ENCODE measurements at regions of chr14 and their contacts with region 1.

Region 1: DNA sequence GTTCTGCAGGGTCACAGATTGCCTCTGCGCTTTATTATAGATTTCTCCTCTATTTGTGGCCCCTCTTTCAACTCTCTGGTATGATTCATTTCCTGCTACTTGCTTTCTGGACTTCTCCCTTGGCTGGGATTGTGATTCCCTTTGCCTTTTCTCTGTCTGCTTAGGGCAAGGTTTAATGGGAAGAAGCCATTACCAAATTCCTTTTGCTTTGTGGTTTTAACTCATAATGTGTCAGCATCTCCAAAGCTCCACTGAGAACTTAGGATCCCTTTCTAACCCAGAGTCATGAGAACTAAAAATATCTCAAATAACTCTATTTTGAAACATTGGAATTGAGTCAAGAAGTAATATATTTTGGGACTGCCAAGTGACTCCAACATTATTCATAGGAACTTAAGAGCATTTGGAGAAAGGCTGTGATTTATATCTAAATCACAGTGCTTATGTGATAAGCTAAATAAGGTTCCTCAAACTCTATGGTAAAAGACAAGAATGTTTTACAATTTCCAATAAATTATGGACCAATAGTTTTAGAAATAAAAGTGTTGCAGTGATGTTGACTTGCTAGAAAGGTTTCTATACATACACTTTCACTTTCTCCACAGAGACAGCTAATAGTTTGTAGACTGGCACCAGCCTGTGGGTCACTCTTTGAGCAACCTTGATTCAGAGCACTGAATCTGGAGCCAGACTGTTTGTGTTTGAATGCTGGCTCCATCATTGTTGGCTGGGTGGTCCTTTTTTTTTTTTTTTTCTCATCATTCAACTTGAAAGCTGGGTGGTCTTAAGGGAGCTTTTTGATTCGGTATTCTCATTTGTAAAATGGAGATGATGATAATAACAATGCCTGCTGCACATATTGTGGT is 93.9 kb downstream of the DACT1 start:
- DNase-seq: peak; percentile 100
- ATAC-seq: peak; percentile 94
- H3K4me3 ChIP-seq: peak overlapping the region; percentile 1; the same call in 1 of the 2 replicates
- H3K27ac ChIP-seq: peak overlapping the region; percentile 85
- H3K4me1 ChIP-seq: peaks cover 31% of the 10 kb centered on the region
- H3K27me3 ChIP-seq: no peaks in the 10 kb centered on the region
- CTCF ChIP-seq: no peak

Region 2: GRCh38 chr14:58919217-58919616 is 187.5 kb after region 1 on chr14:
- CTCF ChIA-PET with region 1: no interaction called
- POLR2A ChIA-PET with region 1: no interaction called
- intact Hi-C with region 1: loop called (anchors 10 kb)
- DNase-seq: no peak
- ATAC-seq: no peak
- H3K4me3 ChIP-seq: no peak overlapping the region
- H3K27ac ChIP-seq: no peak overlapping the region
- H3K4me1 ChIP-seq: peaks cover 13% of the 10 kb centered on the region
- H3K27me3 ChIP-seq: peaks cover 17% of the 10 kb centered on the region; the same call in 1 of the 2 replicates
- CTCF ChIP-seq: no peak

Region 3: GRCh38 chr14:59116984-59117415 is 385.3 kb after region 1 on chr14:
- CTCF ChIA-PET with region 1: no interaction called
- POLR2A ChIA-PET with region 1: no interaction called
- intact Hi-C with region 1: loop called (anchors 2 kb)
- DNase-seq: peak; percentile 99
- ATAC-seq: peak; percentile 93
- H3K4me3 ChIP-seq: no peak overlapping the region
- H3K27ac ChIP-seq: peak overlapping the region; percentile 76
- H3K4me1 ChIP-seq: peaks cover 25% of the 10 kb centered on the region
- H3K27me3 ChIP-seq: peaks cover 8% of the 10 kb centered on the region; the same call in 1 of the 2 replicates
- CTCF ChIP-seq: no peak

Region 4: GRCh38 chr14:59576332-59577294 is 844.9 kb after region 1 on chr14 and contains the start of gene CCDC175:
- CTCF ChIA-PET with region 1: no interaction called
- POLR2A ChIA-PET with region 1: no interaction called
- intact Hi-C with region 1: no loop called
- DNase-seq: peak; percentile 98
- ATAC-seq: peak; percentile 97
- H3K4me3 ChIP-seq: peak within 1 kb of the TSS; percentile 62
- H3K27ac ChIP-seq: no peak within 1 kb of the TSS
- H3K4me1 ChIP-seq: peaks cover 6% of the 10 kb centered on the region
- H3K27me3 ChIP-seq: peaks cover 63% of the 10 kb centered on the region
- CTCF ChIP-seq: peak; percentile 100
- total RNA-seq, gene CCDC175: not detected in 2 replicates